ENCODE measurements at regions of chr4 and their contacts with region 1.

Region 1: DNA sequence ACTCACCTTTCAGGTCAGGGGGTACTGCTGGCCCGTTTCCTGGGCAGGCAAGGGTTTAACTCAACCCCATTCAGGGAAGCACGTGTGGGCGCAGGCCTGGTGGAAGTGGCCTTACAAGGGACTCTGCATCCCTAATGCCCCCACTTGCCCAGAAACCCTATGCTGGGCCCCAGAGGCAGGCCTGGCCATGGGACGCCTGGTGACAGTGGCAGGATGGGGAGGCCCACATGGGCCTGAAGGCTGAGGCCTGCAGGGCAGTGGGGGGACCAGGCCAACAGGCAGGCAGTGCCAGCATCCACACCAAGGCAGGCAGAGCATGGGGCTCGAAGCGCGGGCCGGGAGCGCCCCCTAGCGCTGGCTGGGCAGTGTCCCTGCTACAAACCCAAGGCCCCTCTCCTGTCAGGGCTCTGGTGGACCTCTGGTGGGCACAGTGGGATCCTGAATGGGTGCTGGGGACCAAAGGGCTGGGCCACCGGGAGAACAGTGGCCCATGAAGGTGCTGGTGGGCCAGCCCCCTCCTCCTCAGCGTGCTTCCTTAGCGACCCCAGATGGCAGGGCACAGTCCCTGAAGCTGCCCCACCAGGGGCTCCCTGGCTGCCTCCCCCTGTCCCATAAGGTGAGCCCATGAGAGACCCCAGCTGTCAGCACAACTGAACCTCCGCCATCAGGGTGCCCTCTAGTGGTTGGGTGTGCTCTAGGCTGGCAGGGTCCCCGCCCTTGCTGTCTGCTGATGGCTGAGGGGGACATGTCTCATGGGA is 16.8 kb downstream of the FGFR3 start:
- DNase-seq: peak; percentile 71
- H3K4me3 ChIP-seq: no peak overlapping the region
- H3K27ac ChIP-seq: no peak overlapping the region
- H3K4me1 ChIP-seq: peaks cover 0 to 15% (median 9%) of the 10 kb centered on the region in 4 donors
- H3K27me3 ChIP-seq: no peaks in the 10 kb centered on the region
- CTCF ChIP-seq: peak; percentile 79 to 94 (median 86)
- EP300 ChIP-seq: no peak
- POLR2A ChIP-seq: no peak

Region 2: GRCh38 chr4:866761-867390 is 943.1 kb before region 1 on chr4:
- in situ Hi-C with region 1: no loop called
- intact Hi-C with region 1: no loop called
- DNase-seq: no peak
- H3K4me3 ChIP-seq: no peak overlapping the region
- H3K27ac ChIP-seq: no peak overlapping the region
- H3K4me1 ChIP-seq: no peaks in the 10 kb centered on the region
- H3K27me3 ChIP-seq: no peaks in the 10 kb centered on the region
- CTCF ChIP-seq: no peak
- EP300 ChIP-seq: no peak
- POLR2A ChIP-seq: no peak

Region 3: GRCh38 chr4:1746265-1746691 is 63.7 kb before region 1 on chr4:
- in situ Hi-C with region 1: loop called in 2 of 4 experiments (anchors 10 kb)
- intact Hi-C with region 1: loop called (anchors 5 kb)
- DNase-seq: peak; percentile 74
- H3K4me3 ChIP-seq: no peak overlapping the region
- H3K27ac ChIP-seq: no peak overlapping the region
- H3K4me1 ChIP-seq: peaks cover 0 to 5% (median 2%) of the 10 kb centered on the region in 4 donors
- H3K27me3 ChIP-seq: peaks cover 5% of the 10 kb centered on the region
- CTCF ChIP-seq: peak; percentile 65 to 88 (median 80)
- EP300 ChIP-seq: no peak
- POLR2A ChIP-seq: no peak

Region 4: DNA sequence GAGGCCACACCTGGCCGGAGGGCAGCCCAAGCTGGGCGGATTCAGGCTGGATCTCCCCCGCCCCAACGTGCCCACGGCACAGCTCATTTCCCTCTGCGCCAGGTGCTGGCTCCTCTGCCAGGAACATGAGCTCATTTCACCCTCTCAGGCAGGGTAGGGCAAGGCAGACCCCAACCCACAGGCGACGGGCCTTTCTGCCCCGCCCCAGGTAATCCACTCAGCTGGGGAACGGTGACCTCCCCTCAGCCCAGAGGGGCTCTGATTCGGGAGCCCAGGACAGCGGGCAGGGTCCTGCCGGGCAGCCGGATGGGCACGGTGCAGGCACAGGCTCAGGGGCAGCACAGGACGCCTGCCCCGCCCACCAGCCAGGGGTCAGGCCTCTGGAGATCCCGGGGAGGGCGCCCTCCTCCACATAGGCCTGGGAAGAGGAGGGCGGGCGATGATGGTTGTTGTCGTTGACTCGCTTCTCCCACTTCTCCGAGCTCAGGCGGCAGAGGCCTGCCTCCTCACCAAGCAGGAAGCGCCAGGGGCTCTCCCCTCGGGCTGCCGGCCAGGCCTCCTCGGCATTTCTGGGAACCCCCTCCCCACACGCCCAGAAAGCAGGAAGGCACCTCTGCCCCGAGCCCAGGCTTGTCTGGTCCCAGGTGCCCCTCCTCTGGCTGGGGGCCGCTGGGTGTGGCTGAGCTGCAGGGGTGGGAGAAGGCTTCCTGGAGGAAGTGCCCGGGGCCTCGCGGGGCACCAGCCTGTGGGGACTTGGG is 57.5 kb before region 1 on chr4:
- in situ Hi-C with region 1: loop called in 2 of 4 experiments (anchors 10 kb)
- intact Hi-C with region 1: loop called (anchors 5 kb)
- DNase-seq: peak; percentile 24
- H3K4me3 ChIP-seq: no peak overlapping the region
- H3K27ac ChIP-seq: no peak overlapping the region
- H3K4me1 ChIP-seq: peaks cover 0 to 22% (median 12%) of the 10 kb centered on the region in 4 donors
- H3K27me3 ChIP-seq: peaks cover 4% of the 10 kb centered on the region
- CTCF ChIP-seq: no peak
- EP300 ChIP-seq: no peak
- POLR2A ChIP-seq: no peak

Region 5: DNA sequence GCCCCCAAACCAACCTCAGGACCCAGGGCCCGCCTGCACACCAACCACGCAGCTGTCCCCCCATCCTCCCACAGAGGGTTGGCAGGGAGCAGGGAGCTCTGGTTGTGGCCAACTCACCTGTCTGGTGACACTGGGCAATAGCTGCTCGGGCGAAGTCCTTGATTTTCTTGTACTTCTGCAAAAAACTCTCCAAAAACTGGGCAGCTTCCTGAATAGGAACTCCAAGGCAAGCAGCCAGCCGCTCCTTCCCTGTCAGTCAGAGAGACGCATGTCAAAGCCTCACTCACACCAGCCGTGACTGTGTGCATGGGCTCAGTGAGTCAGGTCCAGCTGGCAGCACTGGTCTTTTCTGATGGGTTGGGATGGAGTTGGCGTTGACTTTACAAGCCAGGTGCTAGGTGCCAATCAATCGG is 275.6 kb after region 1 on chr4:
- in situ Hi-C with region 1: no loop called
- intact Hi-C with region 1: no loop called
- DNase-seq: peak; percentile 2
- H3K4me3 ChIP-seq: no peak overlapping the region
- H3K27ac ChIP-seq: no peak overlapping the region
- H3K4me1 ChIP-seq: no peaks in the 10 kb centered on the region
- H3K27me3 ChIP-seq: no peaks in the 10 kb centered on the region
- CTCF ChIP-seq: no peak
- EP300 ChIP-seq: no peak
- POLR2A ChIP-seq: no peak

Region 6: DNA sequence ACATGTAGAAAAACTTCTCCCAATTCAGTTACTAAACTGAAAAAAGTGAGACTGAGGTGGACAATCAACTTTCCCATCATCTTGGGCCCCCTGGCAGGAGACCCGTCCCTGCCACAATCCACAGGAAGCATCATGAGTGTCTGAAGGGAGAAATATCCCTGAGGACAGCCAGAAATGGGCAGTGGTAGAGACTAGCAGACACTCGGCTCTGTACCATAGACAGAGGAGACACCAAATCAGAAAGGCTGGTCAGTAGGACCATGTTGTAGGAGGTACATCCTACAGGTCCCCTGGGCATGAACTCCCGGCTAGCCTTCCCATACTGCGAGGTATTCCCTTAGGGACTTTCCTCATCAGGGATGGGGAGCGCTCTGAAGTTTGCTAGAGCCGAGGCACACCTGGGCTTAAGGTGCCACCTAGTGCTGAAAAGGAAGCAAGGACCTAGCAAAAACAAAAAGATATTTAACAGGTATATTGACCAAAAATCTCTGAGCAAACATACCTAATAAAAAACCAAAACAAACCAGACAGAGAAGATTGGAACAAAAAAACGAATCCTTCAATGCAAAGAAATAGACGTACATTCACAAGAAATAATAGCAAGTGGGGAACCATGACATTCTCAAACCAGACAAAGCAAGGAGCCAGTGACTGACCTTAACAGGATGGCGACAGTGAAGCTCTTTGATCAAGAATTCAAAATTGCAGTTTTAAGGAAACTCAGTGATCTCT is 376.4 kb after region 1 on chr4:
- in situ Hi-C with region 1: loop called in 1 of 4 experiments (anchors 25 kb)
- intact Hi-C with region 1: no loop called
- DNase-seq: peak; percentile 24
- H3K4me3 ChIP-seq: no peak overlapping the region
- H3K27ac ChIP-seq: no peak overlapping the region
- H3K4me1 ChIP-seq: no peaks in the 10 kb centered on the region
- H3K27me3 ChIP-seq: no peaks in the 10 kb centered on the region
- CTCF ChIP-seq: peak; percentile 24 to 58 (median 46)
- EP300 ChIP-seq: no peak
- POLR2A ChIP-seq: no peak